ENCODE measurements at regions of chr11 and their contacts with region 1.

Region 1: GRCh38 chr11:66282468-66283386 is 4.8 kb downstream of the CNIH2 start:
- DNase-seq: peak; percentile 93 to 97
- H3K4me3 ChIP-seq: peak overlapping the region in 1 of 3 donors; percentile 12
- H3K27ac ChIP-seq: peak overlapping the region in 1 of 2 donors; percentile 14
- H3K4me1 ChIP-seq: peaks cover under 1 to 4% of the 10 kb centered on the region in 2 donors
- H3K27me3 ChIP-seq: no peaks in the 10 kb centered on the region
- CTCF ChIP-seq: peak; percentile 96 to 98 (median 96)
- POLR2A ChIP-seq: no peak

Region 2: GRCh38 chr11:66222358-66223149 is 60.2 kb before region 1 on chr11:
- intact Hi-C with region 1: loop called (anchors 1 kb)
- DNase-seq: peak; percentile 88 to 92
- H3K4me3 ChIP-seq: no peak overlapping the region
- H3K27ac ChIP-seq: peak overlapping the region; percentile 15 to 48
- H3K4me1 ChIP-seq: no peaks in the 10 kb centered on the region
- H3K27me3 ChIP-seq: no peaks in the 10 kb centered on the region
- CTCF ChIP-seq: peak; percentile 99 to 100 (median 100)
- POLR2A ChIP-seq: no peak

Region 3: DNA sequence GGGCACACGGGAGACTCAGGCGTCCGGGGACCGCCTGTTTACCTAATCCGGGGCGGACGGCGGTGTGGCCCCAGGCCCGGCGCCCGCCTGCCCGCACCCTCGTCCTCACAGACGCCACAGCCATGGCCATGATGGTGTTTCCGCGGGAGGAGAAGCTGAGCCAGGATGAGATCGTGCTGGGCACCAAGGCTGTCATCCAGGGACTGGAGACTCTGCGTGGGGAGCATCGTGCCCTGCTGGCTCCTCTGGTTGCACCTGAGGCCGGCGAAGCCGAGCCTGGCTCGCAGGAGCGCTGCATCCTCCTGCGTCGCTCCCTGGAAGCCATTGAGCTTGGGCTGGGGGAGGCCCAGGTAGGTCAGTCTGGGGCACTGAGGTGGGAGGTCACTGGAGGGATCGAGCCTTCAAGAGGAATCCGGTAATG is 24.2 kb before region 1 on chr11:
- intact Hi-C with region 1: no loop called
- DNase-seq: no peak
- H3K4me3 ChIP-seq: peak overlapping the region; percentile 90 to 99 (median 95)
- H3K27ac ChIP-seq: peak overlapping the region; percentile 80 to 83
- H3K4me1 ChIP-seq: no peaks in the 10 kb centered on the region
- H3K27me3 ChIP-seq: no peaks in the 10 kb centered on the region
- CTCF ChIP-seq: peak in 1 of 3 donors; percentile 3
- POLR2A ChIP-seq: no peak

Region 4: GRCh38 chr11:66641834-66642233 is 359.1 kb after region 1 on chr11:
- intact Hi-C with region 1: loop called (anchors 10 kb)
- DNase-seq: no peak
- H3K4me3 ChIP-seq: peak overlapping the region; percentile 1 to 91 (median 78)
- H3K27ac ChIP-seq: no peak overlapping the region
- H3K4me1 ChIP-seq: peaks cover 7 to 64% of the 10 kb centered on the region in 2 donors
- H3K27me3 ChIP-seq: no peaks in the 10 kb centered on the region
- CTCF ChIP-seq: no peak
- POLR2A ChIP-seq: no peak

Measured in breast epithelium (tissue), 4 donors.